PC-9 (cell line): ENCODE measurements at regions of chr7 and their contacts with region 1.

Region 1: GRCh38 chr7:136086712-136087111 is 109.6 kb upstream of the MTPN start:
- DNase-seq: peak; percentile 42 to 68
- H3K4me3 ChIP-seq: peak overlapping the region; percentile 34; the same call in 1 of the 2 replicates
- H3K27ac ChIP-seq: no peak overlapping the region
- H3K4me1 ChIP-seq: no peaks in the 10 kb centered on the region
- H3K27me3 ChIP-seq: peaks cover 4% of the 10 kb centered on the region; the same call in 1 of the 2 replicates
- CTCF ChIP-seq: no peak

Region 2: DNA sequence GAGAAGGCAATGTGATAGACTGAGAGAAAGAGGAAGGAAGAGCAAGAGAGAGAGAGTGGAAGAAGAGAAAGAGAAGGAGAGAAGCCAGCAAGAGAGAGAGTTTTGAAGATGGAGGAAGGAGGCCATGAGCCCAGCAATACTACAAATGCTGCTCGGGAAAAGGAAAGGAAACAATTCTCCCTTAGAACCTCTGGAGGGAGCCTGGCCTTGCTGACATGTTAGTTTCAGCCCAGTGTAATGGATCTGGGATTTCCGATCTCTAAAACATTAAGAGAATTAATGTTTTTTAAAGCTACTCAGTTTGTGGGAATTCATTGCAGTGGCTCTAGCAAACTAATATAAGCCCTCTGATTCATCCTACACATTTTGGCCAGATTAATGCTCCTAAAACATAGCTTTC is 97.3 kb after region 1 on chr7:
- CTCF ChIA-PET with region 1: no interaction called
- POLR2A ChIA-PET with region 1: no interaction called
- intact Hi-C with region 1: no loop called
- DNase-seq: no peak
- H3K4me3 ChIP-seq: no peak overlapping the region
- H3K27ac ChIP-seq: no peak overlapping the region
- H3K4me1 ChIP-seq: no peaks in the 10 kb centered on the region
- H3K27me3 ChIP-seq: no peaks in the 10 kb centered on the region
- CTCF ChIP-seq: no peak

Region 3: DNA sequence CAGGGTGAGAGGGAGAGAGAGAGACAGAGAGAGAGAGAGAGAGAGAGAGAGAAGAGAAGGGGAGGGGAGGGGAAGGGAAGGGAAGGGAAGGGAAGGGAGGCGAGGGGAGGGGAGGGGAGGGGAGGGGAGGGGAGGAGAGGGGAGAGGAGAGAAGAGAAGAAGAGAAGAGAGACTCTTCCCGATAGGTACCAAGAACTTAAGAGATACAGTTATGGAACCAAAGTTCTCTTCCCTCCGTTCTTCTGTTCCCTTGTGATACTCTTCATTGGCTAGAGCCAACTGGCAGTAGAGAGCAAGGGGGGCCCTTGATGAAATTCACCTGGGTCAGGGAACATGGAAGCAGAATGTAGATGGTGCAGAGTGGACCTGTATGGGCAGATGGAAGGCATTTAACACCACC is 1134.8 kb after region 1 on chr7:
- CTCF ChIA-PET with region 1: no interaction called
- POLR2A ChIA-PET with region 1: interaction called, 12 read pairs
- intact Hi-C with region 1: no loop called
- DNase-seq: no peak
- H3K4me3 ChIP-seq: no peak overlapping the region
- H3K27ac ChIP-seq: no peak overlapping the region
- H3K4me1 ChIP-seq: no peaks in the 10 kb centered on the region
- H3K27me3 ChIP-seq: no peaks in the 10 kb centered on the region
- CTCF ChIP-seq: no peak